Activated CD8-positive, alpha-beta T cell treated with anti-CD3 and anti-CD28 coated beads, Interleukin-2, amount 10 ng/mL, durations not matched to agents 7 days and 5 days (primary cell): ENCODE measurements at regions of chr6 and their contacts with region 1.

Region 1: GRCh38 chr6:15389765-15390723 is 144.2 kb downstream of the JARID2 start:
- DNase-seq: peak; percentile 51
- ATAC-seq: peak; percentile 38
- H3K4me3 Mint-ChIP-seq: no peak overlapping the region
- H3K27ac Mint-ChIP-seq: peak overlapping the region; percentile 73
- H3K4me1 Mint-ChIP-seq: peaks cover 82% of the 10 kb centered on the region
- H3K27me3 Mint-ChIP-seq: no peaks in the 10 kb centered on the region

Region 2: GRCh38 chr6:15327271-15327670 is 62.8 kb before region 1 on chr6:
- CTCF ChIA-PET with region 1: interaction called, 15 read pairs
- POLR2A ChIA-PET with region 1: no interaction called
- DNase-seq: peak; percentile 73
- ATAC-seq: peak; percentile 74
- H3K4me3 Mint-ChIP-seq: no peak overlapping the region
- H3K27ac Mint-ChIP-seq: peak overlapping the region; percentile 80
- H3K4me1 Mint-ChIP-seq: peaks cover 89% of the 10 kb centered on the region
- H3K27me3 Mint-ChIP-seq: no peaks in the 10 kb centered on the region